ENCODE measurements at regions of chr11 and their contacts with region 1.

Region 1: DNA sequence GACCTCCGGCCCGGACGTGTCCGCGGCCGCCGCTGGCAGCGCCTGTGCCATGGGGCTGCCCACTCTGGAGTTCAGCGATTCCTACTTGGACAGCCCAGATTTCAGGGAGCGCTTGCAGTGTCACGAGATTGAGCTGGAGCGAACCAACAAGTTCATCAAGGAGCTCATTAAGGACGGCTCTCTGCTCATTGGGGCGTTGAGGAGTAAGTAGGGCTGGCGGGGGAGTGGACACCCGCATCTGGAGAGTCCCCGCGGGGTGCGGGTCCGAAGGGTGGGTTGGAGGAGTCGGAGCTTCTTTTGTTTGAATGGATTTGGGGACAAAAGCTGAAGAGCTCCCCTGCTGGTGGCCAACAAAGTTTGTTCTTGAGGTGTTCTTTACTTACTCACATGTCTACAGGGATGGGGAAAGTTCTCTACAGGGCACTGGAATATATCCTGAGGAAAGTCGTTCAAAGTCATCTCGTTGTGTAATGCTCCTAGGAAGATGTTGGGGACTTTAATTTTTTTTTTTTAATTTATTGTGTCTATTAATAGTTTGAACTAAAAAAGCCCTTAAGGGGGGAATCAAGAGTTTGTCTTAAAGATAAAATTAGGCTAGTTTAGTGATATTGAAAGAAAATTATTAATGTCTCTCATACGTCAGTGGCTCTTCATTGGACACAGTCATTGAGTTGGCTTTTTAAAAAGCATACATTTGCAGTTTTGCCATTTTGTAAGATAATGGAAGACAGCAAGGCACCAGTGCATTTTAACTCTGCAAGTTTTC is 725 bp downstream of the ARHGAP42 start:
- DNase-seq: peak; percentile 62 to 83
- H3K4me3 ChIP-seq: peak overlapping the region; percentile 88
- H3K27ac ChIP-seq: peak overlapping the region; percentile 57
- H3K4me1 ChIP-seq: peaks cover 63% of the 10 kb centered on the region
- H3K27me3 ChIP-seq: no peaks in the 10 kb centered on the region
- CTCF ChIP-seq: peak; percentile 80

Region 2: GRCh38 chr11:100484948-100485347 is 202.9 kb before region 1 on chr11:
- CTCF ChIA-PET with region 1: no interaction called
- POLR2A ChIA-PET with region 1: no interaction called
- intact Hi-C with region 1: no loop called
- DNase-seq: peak in 1 of 2 experiments; percentile 50
- H3K4me3 ChIP-seq: no peak overlapping the region
- H3K27ac ChIP-seq: no peak overlapping the region
- H3K4me1 ChIP-seq: peaks cover 11% of the 10 kb centered on the region; the same call in 1 of the 2 replicates
- H3K27me3 ChIP-seq: no peaks in the 10 kb centered on the region
- CTCF ChIP-seq: no peak

Region 3: GRCh38 chr11:100719809-100720221 is 32.0 kb after region 1 on chr11:
- CTCF ChIA-PET with region 1: no interaction called
- POLR2A ChIA-PET with region 1: interaction called, 3 read pairs
- intact Hi-C with region 1: loop called (anchors 2 kb)
- DNase-seq: peak; percentile 76 to 91
- H3K4me3 ChIP-seq: peak overlapping the region; percentile 9; the same call in 1 of the 2 replicates
- H3K27ac ChIP-seq: peak overlapping the region; percentile 80
- H3K4me1 ChIP-seq: peaks cover 30% of the 10 kb centered on the region
- H3K27me3 ChIP-seq: no peaks in the 10 kb centered on the region
- CTCF ChIP-seq: no peak

Region 4: GRCh38 chr11:100739666-100740065 is 51.9 kb after region 1 on chr11:
- CTCF ChIA-PET with region 1: interaction called, 3 read pairs
- POLR2A ChIA-PET with region 1: no interaction called
- intact Hi-C with region 1: loop called (anchors 2 kb)
- DNase-seq: peak; percentile 74 to 91
- H3K4me3 ChIP-seq: no peak overlapping the region
- H3K27ac ChIP-seq: peak overlapping the region; percentile 63
- H3K4me1 ChIP-seq: peaks cover 40% of the 10 kb centered on the region
- H3K27me3 ChIP-seq: no peaks in the 10 kb centered on the region
- CTCF ChIP-seq: no peak

Region 5: DNA sequence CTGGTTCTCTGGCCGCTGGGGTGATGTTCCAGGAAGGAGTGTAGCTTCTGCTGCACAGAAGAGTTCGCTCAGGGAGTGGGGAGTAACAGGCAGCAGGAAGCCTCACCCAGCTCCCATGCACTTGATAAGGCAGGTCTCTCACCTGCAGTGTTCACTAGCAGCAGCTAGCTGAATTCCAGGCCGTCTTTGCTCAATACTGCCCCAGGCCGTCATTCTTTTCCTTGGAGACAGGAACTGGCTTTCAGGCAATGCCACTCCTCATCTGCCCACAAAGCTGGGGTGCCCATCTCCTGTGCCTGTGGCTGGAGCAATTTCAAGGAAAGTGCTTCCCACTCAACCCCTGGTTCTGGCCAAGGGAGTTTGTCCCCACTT is 65.3 kb after region 1 on chr11:
- CTCF ChIA-PET with region 1: interaction called, 5 read pairs
- POLR2A ChIA-PET with region 1: interaction called, 13 read pairs
- intact Hi-C with region 1: loop called (anchors 1 kb)
- DNase-seq: peak; percentile 84 to 98
- H3K4me3 ChIP-seq: no peak overlapping the region; the same call in 1 of the 2 replicates
- H3K27ac ChIP-seq: peak overlapping the region; percentile 76
- H3K4me1 ChIP-seq: peaks cover 33% of the 10 kb centered on the region
- H3K27me3 ChIP-seq: no peaks in the 10 kb centered on the region
- CTCF ChIP-seq: peak; percentile 13; the same call in 1 of the 2 replicates

Region 6: DNA sequence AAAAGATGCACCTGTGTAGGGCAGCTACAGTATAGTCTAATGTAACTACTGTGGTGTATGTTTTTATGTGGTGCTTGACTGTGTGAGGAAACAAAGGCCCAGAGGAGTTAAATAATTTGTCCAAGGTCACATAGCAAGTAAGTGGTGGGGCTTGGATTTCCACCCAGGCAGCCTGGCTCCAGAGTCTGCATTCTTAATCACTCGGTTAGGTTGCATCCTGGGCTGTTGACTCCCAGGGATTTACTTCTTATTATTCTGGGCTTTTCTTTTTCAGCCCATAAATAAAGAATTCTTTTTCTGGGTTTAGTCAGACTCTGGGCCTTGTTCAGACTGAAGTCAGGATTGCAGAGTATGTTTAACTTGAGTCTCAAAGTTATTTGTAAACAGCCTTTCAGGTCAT is 81.4 kb after region 1 on chr11:
- CTCF ChIA-PET with region 1: interaction called, 13 read pairs
- POLR2A ChIA-PET with region 1: interaction called, 9 read pairs
- intact Hi-C with region 1: no loop called
- DNase-seq: no peak
- H3K4me3 ChIP-seq: no peak overlapping the region
- H3K27ac ChIP-seq: no peak overlapping the region
- H3K4me1 ChIP-seq: no peaks in the 10 kb centered on the region; the same call in 1 of the 2 replicates
- H3K27me3 ChIP-seq: no peaks in the 10 kb centered on the region
- CTCF ChIP-seq: no peak

Region 7: GRCh38 chr11:100793525-100793924 is 105.7 kb after region 1 on chr11:
- CTCF ChIA-PET with region 1: no interaction called
- POLR2A ChIA-PET with region 1: no interaction called
- intact Hi-C with region 1: no loop called
- DNase-seq: no peak
- H3K4me3 ChIP-seq: no peak overlapping the region
- H3K27ac ChIP-seq: no peak overlapping the region
- H3K4me1 ChIP-seq: peaks cover 9% of the 10 kb centered on the region
- H3K27me3 ChIP-seq: no peaks in the 10 kb centered on the region
- CTCF ChIP-seq: no peak

Region 8: GRCh38 chr11:100861223-100861622 is 173.4 kb after region 1 on chr11:
- CTCF ChIA-PET with region 1: no interaction called
- POLR2A ChIA-PET with region 1: no interaction called
- intact Hi-C with region 1: loop called (anchors 1 kb)
- DNase-seq: peak; percentile 68 to 97
- H3K4me3 ChIP-seq: no peak overlapping the region
- H3K27ac ChIP-seq: peak overlapping the region; percentile 62
- H3K4me1 ChIP-seq: peaks cover 34% of the 10 kb centered on the region
- H3K27me3 ChIP-seq: no peaks in the 10 kb centered on the region
- CTCF ChIP-seq: no peak

Region 9: DNA sequence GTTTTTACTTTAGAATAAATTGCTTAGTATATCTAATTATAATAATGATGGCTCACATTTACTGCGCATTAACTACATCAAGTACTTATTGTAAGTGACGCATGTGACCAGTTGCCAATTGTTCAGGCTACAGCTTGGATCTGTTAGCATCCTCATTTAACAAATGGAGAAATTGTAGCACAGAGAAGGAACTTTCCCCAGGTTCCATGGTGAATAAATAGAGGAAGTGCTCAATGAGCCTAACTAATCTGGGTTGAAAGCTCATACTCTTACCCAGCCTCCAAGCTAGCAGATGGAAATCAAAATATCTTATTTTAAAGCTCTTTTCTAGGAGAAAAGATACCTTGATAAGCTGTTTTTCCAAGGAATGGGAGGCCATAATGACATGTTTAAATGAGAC is 1997.9 kb after region 1 on chr11:
- CTCF ChIA-PET with region 1: no interaction called
- POLR2A ChIA-PET with region 1: interaction called, 19 read pairs
- intact Hi-C with region 1: no loop called
- DNase-seq: no peak
- H3K4me3 ChIP-seq: no peak overlapping the region
- H3K27ac ChIP-seq: no peak overlapping the region
- H3K4me1 ChIP-seq: no peaks in the 10 kb centered on the region
- H3K27me3 ChIP-seq: no peaks in the 10 kb centered on the region
- CTCF ChIP-seq: no peak

Measured in PC-9 (cell line).